Endothelial cell of umbilical vein (primary cell): ENCODE measurements at regions of chr20 and their contacts with region 1.

Region 1: GRCh38 chr20:33731693-33732165 is at the start of gene ZNF341:
- DNase-seq: peak; percentile 74
- H3K4me3 ChIP-seq: peak within 1 kb of the TSS; percentile 17 to 59 (median 51)
- H3K27ac ChIP-seq: peak within 1 kb of the TSS; percentile 53
- H3K4me1 ChIP-seq: peaks cover 22% of the 10 kb centered on the region
- H3K27me3 ChIP-seq: no peaks in the 10 kb centered on the region
- CTCF ChIP-seq: peak; percentile 89 to 96
- POLR2A ChIP-seq: peak; percentile 22
- total RNA-seq, gene ZNF341: 3.9 and 4.9 TPM in 2 replicates

Region 2: DNA sequence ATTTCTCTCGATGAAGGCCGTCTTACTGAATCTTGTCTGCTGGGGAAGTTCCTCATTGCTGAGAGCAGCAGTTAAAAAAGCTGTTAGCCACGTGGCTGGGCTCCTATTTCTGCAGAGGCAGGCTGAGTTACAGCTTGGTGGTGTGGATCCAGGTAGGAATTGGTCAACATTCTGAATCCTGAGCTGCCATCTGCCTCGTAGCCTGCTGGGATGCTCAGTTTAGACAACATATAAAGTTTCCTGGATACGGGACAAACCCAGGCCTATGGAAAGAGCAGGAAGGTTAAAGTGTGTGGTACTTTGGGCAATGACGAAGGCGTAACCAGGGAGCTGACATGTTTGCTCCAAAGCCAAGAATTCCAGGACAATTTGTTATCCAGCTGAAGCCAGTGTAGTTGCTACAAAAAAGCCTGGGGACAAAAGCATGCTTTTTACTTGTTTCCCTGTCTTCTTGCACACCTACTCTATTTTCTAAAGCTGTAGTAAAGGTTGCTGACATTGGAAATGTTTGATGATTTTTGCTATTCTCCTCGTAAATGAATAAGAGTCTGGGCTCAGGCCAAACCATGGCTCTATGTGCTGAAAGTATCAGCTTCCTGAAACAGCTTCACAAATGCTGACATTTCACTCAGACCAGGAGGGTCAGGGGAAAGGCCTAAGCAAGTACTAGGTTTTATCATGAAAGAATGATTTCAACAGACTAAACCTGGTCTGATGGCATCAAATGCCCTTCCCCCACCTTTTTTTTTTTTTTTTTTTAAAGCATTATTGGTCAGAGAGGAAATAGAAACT is 1925.0 kb before region 1 on chr20:
- CTCF ChIA-PET with region 1: no interaction called
- POLR2A ChIA-PET with region 1: no interaction called
- dilution Hi-C with region 1: no loop called
- intact Hi-C with region 1: no loop called
- DNase-seq: no peak
- H3K4me3 ChIP-seq: no peak overlapping the region
- H3K27ac ChIP-seq: no peak overlapping the region
- H3K4me1 ChIP-seq: peaks cover under 1% of the 10 kb centered on the region
- H3K27me3 ChIP-seq: no peaks in the 10 kb centered on the region
- CTCF ChIP-seq: no peak
- POLR2A ChIP-seq: no peak

Region 3: GRCh38 chr20:33450867-33451266 is 280.9 kb before region 1 on chr20:
- CTCF ChIA-PET with region 1: no interaction called
- POLR2A ChIA-PET with region 1: no interaction called
- dilution Hi-C with region 1: no loop called
- intact Hi-C with region 1: loop called (anchors 2 kb)
- DNase-seq: no peak
- H3K4me3 ChIP-seq: no peak overlapping the region
- H3K27ac ChIP-seq: no peak overlapping the region
- H3K4me1 ChIP-seq: no peaks in the 10 kb centered on the region
- H3K27me3 ChIP-seq: peaks cover 0 to 2% of the 10 kb centered on the region in 2 experiments
- CTCF ChIP-seq: no peak
- POLR2A ChIP-seq: no peak

Region 4: DNA sequence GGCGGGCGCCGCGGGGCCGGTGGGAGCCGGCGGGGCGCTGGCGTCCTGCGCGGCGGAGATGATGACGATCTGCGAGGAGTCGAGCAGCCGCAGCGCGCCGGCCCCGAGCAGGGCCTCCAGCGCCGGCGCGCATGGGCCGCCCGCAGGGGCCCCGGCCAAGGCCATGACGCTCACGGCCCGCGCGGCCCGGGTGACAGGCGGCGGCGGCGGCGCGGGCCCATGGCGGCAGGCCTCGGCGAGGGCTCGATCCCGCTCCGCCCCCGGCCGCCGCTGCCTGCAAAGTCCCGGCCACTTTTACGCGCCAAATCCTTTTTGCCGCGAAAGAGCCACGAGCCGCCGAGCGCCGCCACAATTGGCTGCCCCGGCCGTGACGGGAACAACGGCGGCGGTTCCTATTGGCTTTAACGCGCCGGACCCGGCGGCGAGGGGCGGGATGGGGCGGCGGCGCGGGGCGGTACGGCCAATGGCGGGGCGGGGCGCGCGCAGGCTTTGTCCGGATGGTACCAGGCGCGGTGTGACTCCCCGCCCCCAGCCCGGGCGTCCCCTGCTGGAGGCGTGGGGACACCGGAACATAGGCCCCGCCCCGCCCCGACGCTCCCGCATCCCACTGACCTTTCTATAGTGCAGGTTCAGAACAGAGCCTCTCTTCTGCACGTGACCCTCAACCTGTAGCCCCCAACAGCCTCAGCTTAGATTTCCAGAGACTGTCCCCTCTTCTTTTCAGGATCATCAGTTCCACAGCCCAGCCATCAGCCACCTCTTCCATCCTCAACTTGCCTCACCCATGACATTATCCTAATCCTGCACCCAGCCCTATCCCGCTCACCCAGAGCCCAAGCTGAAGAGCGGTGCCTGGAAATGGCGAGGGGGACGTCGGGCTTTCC is 45.4 kb before region 1 on chr20 and contains the start of gene E2F1:
- CTCF ChIA-PET with region 1: interaction called, 5 read pairs
- POLR2A ChIA-PET with region 1: no interaction called
- dilution Hi-C with region 1: no loop called
- intact Hi-C with region 1: loop called (anchors 5 kb)
- DNase-seq: peak; percentile 95
- H3K4me3 ChIP-seq: peak within 1 kb of the TSS; percentile 4 to 50 (median 11)
- H3K27ac ChIP-seq: peak within 1 kb of the TSS; percentile 15
- H3K4me1 ChIP-seq: peaks cover 36% of the 10 kb centered on the region
- H3K27me3 ChIP-seq: no peaks in the 10 kb centered on the region
- CTCF ChIP-seq: peak in 1 of 2 donors; percentile 30
- POLR2A ChIP-seq: no peak
- total RNA-seq, gene E2F1: 27.0 and 29.6 TPM in 2 replicates

Region 5: DNA sequence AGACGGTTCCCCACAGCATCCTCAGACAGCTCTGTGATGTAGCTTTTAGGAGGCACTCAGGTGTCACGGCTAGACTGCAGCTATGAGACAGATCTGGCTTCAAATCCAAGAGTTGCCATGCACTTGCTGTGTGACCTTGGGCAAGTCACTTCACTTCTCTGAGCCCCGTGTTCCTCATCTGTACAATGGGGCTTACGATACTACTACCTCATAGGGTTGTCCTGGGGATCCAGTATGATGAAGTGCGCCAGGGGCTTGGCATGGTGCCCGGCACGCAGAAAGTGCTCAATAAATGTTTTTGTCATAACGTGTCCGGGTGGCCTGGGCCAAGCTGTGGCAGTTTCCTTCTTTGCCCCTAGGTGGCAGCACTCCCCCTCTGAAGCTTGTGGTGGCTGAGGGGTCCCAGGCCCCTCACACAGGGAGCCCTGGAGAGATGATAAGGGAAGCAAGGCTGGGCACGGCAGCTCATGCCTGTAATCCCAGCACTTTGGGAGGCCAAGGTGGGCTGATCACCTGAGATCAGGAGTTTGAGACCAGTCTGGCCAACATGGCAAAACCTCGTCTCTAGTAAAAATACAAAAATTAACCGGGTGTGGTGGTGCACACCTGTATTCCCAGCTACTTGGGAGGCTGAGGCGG is 60.3 kb after region 1 on chr20:
- CTCF ChIA-PET with region 1: interaction called, 11 read pairs
- POLR2A ChIA-PET with region 1: no interaction called
- dilution Hi-C with region 1: no loop called
- intact Hi-C with region 1: loop called (anchors 1 kb)
- DNase-seq: peak; percentile 61
- H3K4me3 ChIP-seq: no peak overlapping the region
- H3K27ac ChIP-seq: no peak overlapping the region
- H3K4me1 ChIP-seq: peaks cover 44% of the 10 kb centered on the region
- H3K27me3 ChIP-seq: no peaks in the 10 kb centered on the region
- CTCF ChIP-seq: peak; percentile 79 to 80
- POLR2A ChIP-seq: no peak

Region 6: DNA sequence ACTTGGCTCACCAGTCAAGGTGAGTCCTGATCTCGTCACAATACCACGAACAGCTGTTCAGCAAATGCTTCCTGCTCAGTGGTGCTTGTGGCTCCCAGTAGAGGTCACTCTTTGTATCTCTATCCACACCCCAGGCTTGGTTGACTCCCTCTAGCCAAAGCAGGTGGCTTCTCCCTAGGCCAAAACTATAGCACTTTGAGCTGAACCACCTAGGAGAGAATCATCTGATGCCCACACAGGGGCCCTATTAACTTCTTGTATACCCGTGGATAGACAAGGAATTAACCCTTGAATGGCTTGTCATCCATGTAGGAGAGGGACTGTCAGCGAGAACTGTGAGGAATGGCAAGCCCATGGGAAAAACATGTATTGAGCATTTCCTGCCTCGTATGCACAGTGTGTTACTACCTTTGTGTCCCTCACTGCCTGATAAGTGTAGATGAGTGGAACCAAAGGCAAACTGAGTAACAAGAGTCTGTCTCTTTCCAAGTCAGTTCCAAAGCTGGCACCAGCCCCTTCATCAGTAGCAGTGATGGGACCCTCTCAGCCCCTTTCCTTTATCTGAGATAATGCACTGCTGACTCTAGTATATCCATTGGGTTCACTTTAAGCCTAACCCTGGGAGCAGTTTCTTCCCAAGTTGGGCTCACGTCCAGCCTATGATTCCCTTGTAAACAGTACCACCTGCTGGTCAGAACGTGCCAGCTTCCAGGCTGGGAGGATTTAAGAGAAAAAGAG is 337.8 kb after region 1 on chr20:
- CTCF ChIA-PET with region 1: interaction called, 8 read pairs
- POLR2A ChIA-PET with region 1: no interaction called
- dilution Hi-C with region 1: no loop called
- intact Hi-C with region 1: loop called (anchors 5 kb)
- DNase-seq: peak; percentile 90
- H3K4me3 ChIP-seq: no peak overlapping the region
- H3K27ac ChIP-seq: no peak overlapping the region
- H3K4me1 ChIP-seq: no peaks in the 10 kb centered on the region
- H3K27me3 ChIP-seq: no peaks in the 10 kb centered on the region
- CTCF ChIP-seq: peak; percentile 64 to 93
- POLR2A ChIP-seq: no peak